CD8-positive, alpha-beta memory T cell (primary cell): ENCODE measurements at regions of chr1 and their contacts with region 1.

Region 1: DNA sequence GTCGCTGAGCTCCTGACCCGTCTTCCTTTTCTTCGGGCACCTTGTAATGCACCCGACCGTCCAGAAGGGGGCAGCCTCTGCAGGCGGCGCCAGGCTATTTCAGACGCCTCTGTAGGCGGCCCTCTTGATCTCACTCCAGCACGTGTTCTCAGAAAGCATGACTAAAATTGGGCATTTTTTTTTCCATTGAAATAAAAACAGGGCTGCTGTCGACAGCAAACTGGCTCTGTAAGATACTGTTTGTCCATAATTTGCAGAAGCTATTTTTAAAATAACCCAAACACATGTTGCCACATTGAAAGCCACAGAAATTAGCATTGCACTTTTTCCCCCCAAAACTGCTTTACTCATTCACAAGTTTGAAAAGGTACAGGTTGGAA is 78.0 kb downstream of the STUM start:
- DNase-seq: peak; percentile 65 to 84 (median 67)
- H3K4me3 ChIP-seq: peak overlapping the region; percentile 45
- H3K4me3 Mint-ChIP-seq: peak overlapping the region in 6 of 7 donors; percentile 63 to 80 (median 74)
- H3K27ac ChIP-seq: no peak overlapping the region
- H3K27ac Mint-ChIP-seq: peak overlapping the region in 6 of 8 donors; percentile 11 to 72 (median 16)
- H3K4me1 ChIP-seq: peaks cover 10% of the 10 kb centered on the region
- H3K4me1 Mint-ChIP-seq: peaks cover 12 to 20% (median 19%) of the 10 kb centered on the region in 3 donors
- H3K27me3 ChIP-seq: no peaks in the 10 kb centered on the region
- H3K27me3 Mint-ChIP-seq: peaks cover 0 to 7% of the 10 kb centered on the region in 2 donors

Region 2: DNA sequence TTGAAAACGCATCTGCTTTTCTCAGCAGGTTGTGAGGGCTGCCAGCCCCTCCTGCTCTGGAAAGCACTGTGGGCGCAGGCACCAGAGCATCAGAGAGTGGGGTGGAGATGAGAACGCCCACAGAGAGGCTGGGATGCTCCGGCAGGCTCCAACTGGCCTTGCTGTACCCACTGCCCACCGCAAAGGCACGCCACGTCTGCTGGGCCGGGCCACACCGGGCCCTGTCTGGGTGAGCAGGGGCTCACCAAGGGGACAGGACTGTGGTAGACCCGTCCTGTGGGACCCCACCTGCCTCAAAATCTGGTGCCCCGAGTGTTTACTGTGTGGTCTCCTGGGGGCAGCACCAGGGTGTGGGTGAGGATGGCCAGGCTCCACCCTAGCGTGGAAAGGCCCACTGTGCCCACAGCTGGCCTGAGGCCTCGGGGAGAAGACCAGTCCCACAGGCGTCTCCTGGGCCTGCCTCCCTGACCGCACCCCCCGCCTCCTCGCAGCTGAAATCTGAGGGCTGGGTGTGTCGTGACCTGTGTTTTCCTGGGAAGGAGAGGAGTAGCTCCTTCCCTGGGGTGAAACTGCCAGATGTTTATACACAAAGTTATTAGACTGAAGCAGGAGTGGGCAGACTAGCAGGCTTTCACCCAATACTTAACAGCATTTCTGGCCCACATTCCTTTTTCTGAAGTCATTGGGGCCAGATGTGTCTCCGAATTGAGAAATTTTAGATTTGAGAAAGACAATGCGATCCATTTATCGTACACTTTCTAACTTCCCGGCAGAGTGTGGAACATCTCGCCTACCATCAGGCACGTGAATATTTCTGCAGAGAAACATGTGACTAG is 24.2 kb before region 1 on chr1:
- CTCF ChIA-PET with region 1: no interaction called
- POLR2A ChIA-PET with region 1: no interaction called
- DNase-seq: no peak
- H3K4me3 ChIP-seq: no peak overlapping the region
- H3K4me3 Mint-ChIP-seq: no peak overlapping the region
- H3K27ac ChIP-seq: no peak overlapping the region
- H3K27ac Mint-ChIP-seq: no peak overlapping the region
- H3K4me1 ChIP-seq: no peaks in the 10 kb centered on the region
- H3K4me1 Mint-ChIP-seq: no peaks in the 10 kb centered on the region
- H3K27me3 ChIP-seq: no peaks in the 10 kb centered on the region
- H3K27me3 Mint-ChIP-seq: peaks cover 11 to 12% of the 10 kb centered on the region in 2 donors

Region 3: DNA sequence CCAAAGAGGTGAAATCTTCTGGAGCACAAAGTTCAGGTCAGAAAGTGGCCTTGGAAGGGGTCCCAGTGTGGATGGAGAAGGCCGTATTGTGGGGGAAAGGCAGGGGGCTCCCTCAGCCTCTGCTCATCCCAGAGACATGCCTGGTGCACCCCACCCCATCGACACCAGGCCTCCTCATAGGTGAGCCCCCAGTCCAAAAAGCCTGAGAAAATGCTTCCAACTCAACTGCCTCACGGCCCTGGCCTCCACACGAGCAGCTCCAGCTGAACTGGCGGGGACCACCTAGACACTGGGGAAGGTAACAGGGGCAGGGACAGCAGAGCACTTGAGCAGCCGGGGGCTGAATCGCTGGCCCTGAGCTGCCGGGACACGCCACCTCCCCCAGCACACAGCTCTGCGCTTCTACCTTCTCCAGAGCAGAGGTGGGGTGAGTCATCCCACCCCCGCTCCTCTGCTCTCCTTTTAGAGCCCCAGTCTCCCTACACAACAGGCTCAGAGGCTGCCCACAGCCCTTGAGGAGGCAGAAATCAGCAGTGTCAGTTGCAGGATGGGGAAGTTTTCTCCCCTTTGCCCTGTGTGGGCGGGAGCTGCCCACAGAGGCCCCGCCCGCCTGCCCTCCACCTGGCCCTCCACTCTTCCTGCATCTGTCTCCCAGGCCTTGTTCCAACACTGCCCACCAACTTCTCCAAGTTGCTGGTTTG is 16.5 kb after region 1 on chr1:
- CTCF ChIA-PET with region 1: interaction called, 12 read pairs
- POLR2A ChIA-PET with region 1: interaction called, 7 read pairs
- DNase-seq: peak in 1 of 5 donors; percentile 62
- H3K4me3 ChIP-seq: no peak overlapping the region
- H3K4me3 Mint-ChIP-seq: peak overlapping the region in 5 of 7 donors; percentile 24 to 76 (median 59)
- H3K27ac ChIP-seq: no peak overlapping the region
- H3K27ac Mint-ChIP-seq: peak overlapping the region; percentile 67 to 93 (median 90)
- H3K4me1 ChIP-seq: peaks cover 54% of the 10 kb centered on the region
- H3K4me1 Mint-ChIP-seq: peaks cover 9 to 40% (median 40%) of the 10 kb centered on the region in 3 donors
- H3K27me3 ChIP-seq: no peaks in the 10 kb centered on the region
- H3K27me3 Mint-ChIP-seq: no peaks in the 10 kb centered on the region

Region 4: GRCh38 chr1:226827968-226828513 is 201.5 kb after region 1 on chr1:
- CTCF ChIA-PET with region 1: interaction called, 47 read pairs
- POLR2A ChIA-PET with region 1: no interaction called
- DNase-seq: peak; percentile 87 to 96 (median 92)
- H3K4me3 ChIP-seq: peak overlapping the region; percentile 20
- H3K4me3 Mint-ChIP-seq: peak overlapping the region in 6 of 7 donors; percentile 29 to 81 (median 64)
- H3K27ac ChIP-seq: peak overlapping the region; percentile 59
- H3K27ac Mint-ChIP-seq: peak overlapping the region in 6 of 8 donors; percentile 41 to 93 (median 88)
- H3K4me1 ChIP-seq: peaks cover 11% of the 10 kb centered on the region
- H3K4me1 Mint-ChIP-seq: peaks cover 14 to 16% (median 15%) of the 10 kb centered on the region in 3 donors
- H3K27me3 ChIP-seq: no peaks in the 10 kb centered on the region
- H3K27me3 Mint-ChIP-seq: peaks cover 0 to 5% of the 10 kb centered on the region in 2 donors